Dendritic cell treated with granulocyte-macrophage colony-stimulating factor and Interleukin-4, amounts not matched to agents 40 ng/mL and 50 ng/mL, for 4 days (primary cell): ENCODE measurements at regions of chr1 and their contacts with region 1.

Region 1: DNA sequence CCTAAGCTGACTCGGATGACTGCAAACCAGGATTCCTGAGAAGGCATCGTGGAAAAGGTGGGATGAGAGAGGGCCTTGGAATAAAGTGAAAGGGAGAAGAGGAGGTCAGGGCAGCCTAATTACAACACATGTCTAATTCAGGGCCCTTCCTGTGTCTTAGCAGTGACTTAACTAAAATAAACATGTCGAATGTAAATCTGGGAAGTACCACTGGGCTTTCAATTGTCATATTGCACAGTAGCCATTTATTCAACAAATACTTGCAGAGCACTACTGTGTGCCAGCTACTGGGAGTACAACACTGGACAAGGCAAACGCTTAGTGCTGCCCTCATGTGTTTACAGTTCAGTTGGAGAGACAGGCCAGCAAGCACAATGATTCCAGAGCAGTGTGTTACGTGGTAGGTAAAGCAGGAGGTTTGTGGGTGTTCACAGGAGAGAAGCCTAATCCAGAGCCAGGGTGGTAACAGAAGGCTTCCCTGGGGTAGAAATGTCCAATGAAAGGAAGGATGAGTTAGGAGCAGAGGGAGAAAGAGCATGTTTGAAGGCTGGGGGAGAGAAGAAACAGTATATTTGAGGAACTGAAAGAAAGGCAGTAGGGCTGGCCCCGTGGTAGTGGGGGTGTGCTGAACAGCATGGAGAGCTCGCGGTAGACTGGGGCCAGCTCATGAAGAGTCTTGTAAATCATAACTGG is 38.0 kb upstream of the RASAL2 start:
- H3K4me3 Mint-ChIP-seq: peak overlapping the region; percentile 43
- H3K27ac Mint-ChIP-seq: peak overlapping the region; percentile 85
- H3K4me1 Mint-ChIP-seq: peaks cover 67% of the 10 kb centered on the region
- H3K27me3 Mint-ChIP-seq: peaks cover 2% of the 10 kb centered on the region

Region 2: DNA sequence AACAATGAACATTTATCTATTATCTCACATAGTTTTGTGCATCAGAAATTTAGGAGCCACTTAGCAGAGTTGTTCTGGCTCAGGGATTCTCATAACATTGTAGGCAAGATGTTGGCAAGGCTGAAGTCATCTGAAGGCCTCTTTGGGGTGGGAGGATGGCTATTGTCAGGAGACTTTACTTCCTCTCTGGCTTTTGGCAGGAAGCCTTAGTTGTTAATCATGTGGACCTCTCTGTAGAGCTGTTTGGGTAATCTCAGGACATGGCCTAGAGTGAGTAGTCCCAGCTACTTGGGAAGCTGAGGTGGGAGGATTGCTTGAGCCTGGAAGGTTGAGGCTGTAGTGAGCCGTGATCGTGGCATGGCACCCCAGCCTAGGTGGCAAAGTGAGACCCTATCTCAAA is 78.1 kb after region 1 on chr1:
- intact Hi-C with region 1: loop called (anchors 5 kb)
- H3K4me3 Mint-ChIP-seq: no peak overlapping the region
- H3K27ac Mint-ChIP-seq: peak overlapping the region; percentile 80
- H3K4me1 Mint-ChIP-seq: peaks cover 40% of the 10 kb centered on the region
- H3K27me3 Mint-ChIP-seq: no peaks in the 10 kb centered on the region

Region 3: GRCh38 chr1:178189814-178190213 is 133.9 kb after region 1 on chr1:
- intact Hi-C with region 1: loop called (anchors 1 kb)
- H3K4me3 Mint-ChIP-seq: no peak overlapping the region
- H3K27ac Mint-ChIP-seq: no peak overlapping the region
- H3K4me1 Mint-ChIP-seq: peaks cover 54% of the 10 kb centered on the region
- H3K27me3 Mint-ChIP-seq: no peaks in the 10 kb centered on the region

Region 4: DNA sequence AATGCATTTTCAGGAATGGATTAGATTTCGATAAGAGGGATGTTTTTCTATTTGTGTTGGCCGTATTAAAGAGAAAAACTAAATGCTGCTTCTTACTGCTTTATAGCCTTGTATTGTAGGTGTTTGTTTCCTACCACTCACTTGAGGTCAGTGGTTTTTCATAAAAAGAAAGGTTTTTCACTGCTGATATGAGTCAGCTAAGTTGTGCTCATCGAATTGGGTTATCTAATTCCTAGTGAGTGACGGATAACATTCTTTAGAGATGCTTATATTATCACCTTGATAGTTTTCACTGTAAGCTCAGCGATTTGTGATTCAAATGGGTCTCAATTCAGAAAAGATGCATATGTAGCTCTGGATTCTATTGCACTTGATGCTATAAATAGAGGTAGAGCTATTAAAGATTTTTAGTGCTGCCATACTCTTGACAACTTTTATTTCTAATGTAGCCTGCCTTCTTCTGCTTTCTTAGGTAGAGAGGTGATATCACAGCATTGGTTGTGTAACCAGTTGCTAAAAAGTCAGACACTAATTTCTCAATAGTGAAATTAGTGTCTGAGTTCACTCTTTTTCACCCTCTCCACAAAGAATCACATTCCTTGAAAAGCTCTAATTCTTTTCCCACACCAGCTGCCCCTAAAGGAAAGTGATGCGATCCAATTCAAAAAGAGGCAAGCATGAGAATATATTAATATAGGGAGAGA is 217.9 kb after region 1 on chr1:
- intact Hi-C with region 1: no loop called
- H3K4me3 Mint-ChIP-seq: no peak overlapping the region
- H3K27ac Mint-ChIP-seq: no peak overlapping the region
- H3K4me1 Mint-ChIP-seq: peaks cover 64% of the 10 kb centered on the region
- H3K27me3 Mint-ChIP-seq: no peaks in the 10 kb centered on the region